Spleen (tissue), 13 donors: ENCODE measurements at regions of chr1 and their contacts with region 1.

Region 1: GRCh38 chr1:6245086-6245868 is 1.3 kb downstream of the HES3 start:
- DNase-seq: peak; percentile 92
- H3K4me3 ChIP-seq: peak overlapping the region in 4 of 8 donors; percentile 5 to 52 (median 16)
- H3K27ac ChIP-seq: no peak overlapping the region
- H3K4me1 ChIP-seq: peaks cover 29 to 73% (median 56%) of the 10 kb centered on the region in 6 donors
- H3K27me3 ChIP-seq: peaks cover 13 to 100% (median 87%) of the 10 kb centered on the region in 7 donors
- CTCF ChIP-seq: peak; percentile 56 to 86 (median 75)
- POLR2A ChIP-seq: no peak

Region 2: DNA sequence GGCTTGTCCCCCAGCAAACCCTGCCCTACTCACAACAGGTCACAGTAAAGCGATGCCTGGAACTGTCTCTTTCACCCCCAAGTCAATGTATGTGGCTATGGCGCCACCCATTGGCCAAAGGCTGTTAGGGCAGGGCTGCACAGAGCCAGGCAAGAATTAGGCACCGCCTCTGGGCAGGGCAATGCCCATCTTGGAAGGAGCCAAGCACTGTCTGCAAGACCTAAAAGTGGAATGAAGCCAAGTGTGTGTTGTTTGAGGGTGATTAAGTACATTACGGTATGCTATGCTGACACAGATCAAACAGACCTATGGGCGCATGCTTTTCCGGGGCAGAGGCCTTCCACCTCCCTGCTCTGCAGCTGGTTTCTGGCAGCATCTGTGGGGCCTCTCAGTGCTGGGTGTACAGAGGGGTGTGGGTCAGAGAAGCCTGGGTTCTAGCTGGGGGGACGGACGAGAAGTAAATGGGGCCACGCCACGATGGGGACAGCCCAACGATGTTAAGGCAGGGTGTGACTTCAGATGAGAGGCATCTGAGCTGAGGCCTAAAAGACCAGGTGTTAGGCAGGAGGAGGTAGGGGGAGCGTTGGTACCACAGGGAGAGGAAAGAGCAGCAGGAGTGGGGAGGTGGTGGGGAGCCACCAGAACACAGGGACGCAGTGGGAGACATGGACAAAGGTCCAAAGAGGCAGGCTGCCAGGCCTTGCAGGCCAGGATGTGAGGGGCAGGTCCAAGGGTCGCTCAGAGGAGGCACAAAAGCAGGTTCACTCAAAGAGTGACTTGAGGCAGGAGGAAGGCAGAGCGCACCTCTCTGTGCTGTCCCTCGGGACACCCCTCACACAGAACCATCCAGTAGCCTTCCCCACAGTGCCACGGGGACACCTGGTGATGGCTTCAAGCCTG is 98.5 kb after region 1 on chr1:
- intact Hi-C with region 1: loop called (anchors 5 kb)
- DNase-seq: no peak
- H3K4me3 ChIP-seq: no peak overlapping the region
- H3K27ac ChIP-seq: no peak overlapping the region
- H3K4me1 ChIP-seq: peaks cover 4 to 29% (median 14%) of the 10 kb centered on the region in 6 donors
- H3K27me3 ChIP-seq: no peaks in the 10 kb centered on the region
- CTCF ChIP-seq: peak; percentile 63 to 84 (median 78)
- POLR2A ChIP-seq: no peak

Region 3: GRCh38 chr1:6409053-6409452 is 163.8 kb after region 1 on chr1:
- intact Hi-C with region 1: loop called (anchors 5 kb)
- DNase-seq: no peak
- H3K4me3 ChIP-seq: no peak overlapping the region
- H3K27ac ChIP-seq: no peak overlapping the region
- H3K4me1 ChIP-seq: peaks cover 0 to 10% (median 3%) of the 10 kb centered on the region in 6 donors
- H3K27me3 ChIP-seq: peaks cover 0 to 44% (median 2%) of the 10 kb centered on the region in 7 donors
- CTCF ChIP-seq: no peak
- POLR2A ChIP-seq: no peak

Region 4: DNA sequence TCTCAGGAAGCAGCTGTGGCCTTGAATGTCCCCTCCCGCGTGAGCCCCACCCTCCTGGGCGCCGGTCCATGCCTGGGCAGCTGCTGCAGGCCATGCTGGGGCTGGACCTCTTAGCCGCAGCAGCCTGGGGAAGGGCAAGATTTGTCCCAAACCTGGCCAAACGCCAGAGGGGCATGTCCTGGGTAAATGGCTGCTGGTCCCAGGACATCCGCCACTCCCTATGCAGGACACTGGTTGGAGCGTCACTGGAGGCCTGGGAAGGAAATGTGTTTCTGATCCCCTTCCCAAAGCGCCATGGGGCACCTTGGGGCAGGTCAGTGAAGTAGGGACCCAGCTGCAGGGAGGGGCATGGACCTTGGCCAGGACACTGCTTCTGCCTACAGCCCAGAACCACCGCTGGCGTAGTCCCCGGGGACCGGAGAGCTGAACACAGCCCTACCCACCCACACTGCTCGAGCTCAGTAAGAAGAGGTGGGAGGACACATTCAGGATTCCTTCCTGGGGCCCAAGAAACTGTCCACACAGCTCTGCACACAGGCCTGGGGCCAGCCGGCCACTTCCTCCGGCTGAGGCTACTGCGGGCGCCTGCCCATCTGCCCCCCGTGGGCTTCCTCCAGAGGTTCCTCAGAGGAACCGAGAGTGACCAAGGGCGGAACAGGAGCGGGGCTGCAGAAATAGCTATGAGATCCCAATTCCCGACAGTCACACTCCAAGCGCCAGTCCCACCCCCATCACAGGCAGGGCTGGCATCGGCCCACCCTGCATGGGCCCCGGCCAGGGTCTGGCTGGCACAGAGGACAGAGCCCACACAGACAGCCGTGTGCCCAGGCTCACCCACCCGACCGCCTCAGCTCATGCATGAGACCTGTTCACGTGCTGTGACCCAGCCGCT is 257.0 kb after region 1 on chr1:
- intact Hi-C with region 1: no loop called
- DNase-seq: peak; percentile 89
- H3K4me3 ChIP-seq: no peak overlapping the region
- H3K27ac ChIP-seq: peak overlapping the region; percentile 46 to 86 (median 78)
- H3K4me1 ChIP-seq: peaks cover 18 to 73% (median 52%) of the 10 kb centered on the region in 6 donors
- H3K27me3 ChIP-seq: peaks cover 0 to 27% (median 0%) of the 10 kb centered on the region in 7 donors
- CTCF ChIP-seq: peak in 1 of 11 experiments; percentile 6
- POLR2A ChIP-seq: no peak